ENCODE measurements at regions of chr7 and their contacts with region 1.

Region 1: DNA sequence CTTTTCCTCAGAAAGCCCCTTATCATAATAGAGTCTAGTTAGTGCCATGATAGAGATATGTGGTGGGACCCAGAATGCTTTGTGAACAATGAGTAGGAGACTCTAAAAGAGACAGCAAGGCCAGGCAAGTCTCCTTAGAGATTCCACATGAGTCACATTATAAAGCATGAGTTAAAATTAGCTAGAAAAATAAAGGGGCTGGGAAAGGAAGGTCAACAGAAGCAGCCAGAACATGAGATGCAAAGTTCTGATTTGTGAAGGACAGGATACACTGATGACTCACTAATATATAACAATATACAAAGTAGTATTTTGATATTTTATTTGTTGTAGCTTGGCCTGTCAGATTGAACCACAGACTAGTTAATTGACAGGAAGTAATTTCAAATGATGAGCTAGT is 25.3 kb upstream of the SNX13 start:
- DNase-seq: peak; percentile 71
- ATAC-seq: peak; percentile 82
- H3K4me3 ChIP-seq: no peak overlapping the region
- H3K27ac ChIP-seq: no peak overlapping the region
- H3K4me1 ChIP-seq: peaks cover 2% of the 10 kb centered on the region; the same call in 1 of the 2 replicates
- H3K27me3 ChIP-seq: no peaks in the 10 kb centered on the region; the same call in 1 of the 2 replicates
- CTCF ChIP-seq: no peak
- POLR2A ChIP-seq: no peak
- RAD21 ChIP-seq: no peak

Region 2: GRCh38 chr7:16891338-16891737 is 1074.3 kb before region 1 on chr7:
- CTCF ChIA-PET with region 1: no interaction called
- POLR2A ChIA-PET with region 1: no interaction called
- dilution Hi-C with region 1: no loop called
- in situ Hi-C with region 1: no loop called
- intact Hi-C with region 1: loop called (anchors 10 kb)
- DNase-seq: peak; percentile 72
- ATAC-seq: peak; percentile 92
- H3K4me3 ChIP-seq: no peak overlapping the region
- H3K27ac ChIP-seq: no peak overlapping the region
- H3K4me1 ChIP-seq: no peaks in the 10 kb centered on the region
- H3K27me3 ChIP-seq: no peaks in the 10 kb centered on the region
- CTCF ChIP-seq: peak; percentile 80
- POLR2A ChIP-seq: no peak
- RAD21 ChIP-seq: peak; percentile 95

Region 3: GRCh38 chr7:17706734-17707133 is 258.9 kb before region 1 on chr7:
- CTCF ChIA-PET with region 1: interaction called, 3 read pairs
- POLR2A ChIA-PET with region 1: no interaction called
- dilution Hi-C with region 1: no loop called
- in situ Hi-C with region 1: no loop called
- intact Hi-C with region 1: loop called (anchors 10 kb)
- DNase-seq: peak; percentile 72
- ATAC-seq: peak; percentile 82
- H3K4me3 ChIP-seq: no peak overlapping the region
- H3K27ac ChIP-seq: no peak overlapping the region
- H3K4me1 ChIP-seq: no peaks in the 10 kb centered on the region
- H3K27me3 ChIP-seq: peaks cover 5% of the 10 kb centered on the region
- CTCF ChIP-seq: peak; percentile 77
- POLR2A ChIP-seq: no peak
- RAD21 ChIP-seq: peak; percentile 80

Region 4: GRCh38 chr7:17878627-17879026 is 87.0 kb before region 1 on chr7:
- CTCF ChIA-PET with region 1: no interaction called
- POLR2A ChIA-PET with region 1: no interaction called
- dilution Hi-C with region 1: no loop called
- in situ Hi-C with region 1: no loop called
- intact Hi-C with region 1: no loop called
- DNase-seq: no peak
- ATAC-seq: no peak
- H3K4me3 ChIP-seq: no peak overlapping the region
- H3K27ac ChIP-seq: no peak overlapping the region
- H3K4me1 ChIP-seq: no peaks in the 10 kb centered on the region
- H3K27me3 ChIP-seq: no peaks in the 10 kb centered on the region
- CTCF ChIP-seq: no peak
- POLR2A ChIP-seq: no peak
- RAD21 ChIP-seq: no peak

Region 5: GRCh38 chr7:17991866-17992648 is 26.5 kb after region 1 on chr7:
- CTCF ChIA-PET with region 1: no interaction called
- POLR2A ChIA-PET with region 1: no interaction called
- dilution Hi-C with region 1: no loop called
- in situ Hi-C with region 1: no loop called
- intact Hi-C with region 1: no loop called
- DNase-seq: no peak
- ATAC-seq: no peak
- H3K4me3 ChIP-seq: no peak overlapping the region
- H3K27ac ChIP-seq: no peak overlapping the region
- H3K4me1 ChIP-seq: no peaks in the 10 kb centered on the region; the same call in 1 of the 2 replicates
- H3K27me3 ChIP-seq: no peaks in the 10 kb centered on the region
- CTCF ChIP-seq: peak; percentile 20; the same call in 1 of the 2 replicates
- POLR2A ChIP-seq: no peak
- RAD21 ChIP-seq: no peak; the same call in 1 of the 2 replicates

Region 6: GRCh38 chr7:18320971-18321567 is 355.5 kb after region 1 on chr7:
- CTCF ChIA-PET with region 1: no interaction called
- POLR2A ChIA-PET with region 1: no interaction called
- dilution Hi-C with region 1: no loop called
- in situ Hi-C with region 1: loop called (anchors 10 kb)
- intact Hi-C with region 1: no loop called
- DNase-seq: peak; percentile 58
- ATAC-seq: peak; percentile 87
- H3K4me3 ChIP-seq: no peak overlapping the region
- H3K27ac ChIP-seq: no peak overlapping the region
- H3K4me1 ChIP-seq: no peaks in the 10 kb centered on the region
- H3K27me3 ChIP-seq: 0 out of 2 replicates have a peak, but pooled peaks cover 2% of the 10 kb centered on the region
- CTCF ChIP-seq: peak; percentile 58
- POLR2A ChIP-seq: no peak
- RAD21 ChIP-seq: peak; percentile 56

Measured in IMR-90 (cell line).